Activated CD4-positive, alpha-beta memory T cell treated with anti-CD3 and anti-CD28 coated beads for 36 hours (primary cell): ENCODE measurements at regions of chr2 and their contacts with region 1.

Region 1: DNA sequence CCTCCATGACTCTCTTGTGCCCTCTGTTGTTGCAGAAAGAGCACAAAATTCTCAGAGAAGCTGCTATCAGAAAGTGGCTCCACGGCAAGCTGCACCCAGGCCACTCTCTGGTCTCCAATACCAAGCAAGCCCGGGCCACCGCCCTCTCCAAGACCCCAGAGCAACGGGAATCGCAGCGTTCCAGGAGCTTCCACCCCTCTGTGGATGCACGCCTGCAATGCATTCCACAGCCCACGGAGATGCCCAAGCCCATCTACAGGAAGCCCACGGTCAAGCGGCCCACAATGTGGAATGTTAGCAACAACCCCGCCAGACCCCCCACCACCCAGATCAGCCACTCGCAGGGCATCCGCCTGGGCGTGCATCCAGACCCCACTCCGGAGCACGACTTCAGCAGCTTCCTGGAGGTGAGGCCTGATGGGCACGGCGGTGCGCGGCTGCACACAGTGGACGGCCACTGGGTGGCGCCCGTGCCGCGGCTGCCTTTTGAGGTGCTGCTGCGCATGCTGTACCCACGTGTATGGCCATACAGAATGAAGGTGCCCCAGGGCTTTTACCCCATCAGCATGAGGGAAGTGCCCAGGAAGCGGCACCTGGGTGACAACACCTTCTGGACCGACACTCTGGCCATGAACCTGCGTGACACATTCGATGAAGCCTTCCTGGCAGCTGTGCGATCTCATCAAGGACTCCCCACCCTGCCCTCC is 6.3 kb downstream of the ANKRD53 start:
- DNase-seq: peak; percentile 87
- H3K4me3 Mint-ChIP-seq: no peak overlapping the region
- H3K27ac Mint-ChIP-seq: no peak overlapping the region
- H3K4me1 Mint-ChIP-seq: peaks cover 12% of the 10 kb centered on the region
- H3K27me3 Mint-ChIP-seq: no peaks in the 10 kb centered on the region

Region 2: GRCh38 chr2:70994756-70995729 is 10.3 kb after region 1 on chr2 and contains the start of gene TEX261:
- CTCF ChIA-PET with region 1: interaction called, 53 read pairs
- POLR2A ChIA-PET with region 1: no interaction called
- intact Hi-C with region 1: loop called (anchors 1 kb)
- DNase-seq: peak; percentile 94
- H3K4me3 Mint-ChIP-seq: peak within 1 kb of the TSS; percentile 93
- H3K27ac Mint-ChIP-seq: peak within 1 kb of the TSS; percentile 91
- H3K4me1 Mint-ChIP-seq: peaks cover 31% of the 10 kb centered on the region
- H3K27me3 Mint-ChIP-seq: no peaks in the 10 kb centered on the region
- total RNA-seq, gene TEX261: 29.0 to 29.9 TPM

Region 3: GRCh38 chr2:71000780-71001591 is 16.3 kb after region 1 on chr2:
- CTCF ChIA-PET with region 1: interaction called, 53 read pairs
- POLR2A ChIA-PET with region 1: no interaction called
- intact Hi-C with region 1: loop called (anchors 1 kb)
- DNase-seq: peak; percentile 89
- H3K4me3 Mint-ChIP-seq: peak overlapping the region; percentile 72
- H3K27ac Mint-ChIP-seq: peak overlapping the region; percentile 74
- H3K4me1 Mint-ChIP-seq: peaks cover 7% of the 10 kb centered on the region
- H3K27me3 Mint-ChIP-seq: peaks cover 2% of the 10 kb centered on the region

Region 4: DNA sequence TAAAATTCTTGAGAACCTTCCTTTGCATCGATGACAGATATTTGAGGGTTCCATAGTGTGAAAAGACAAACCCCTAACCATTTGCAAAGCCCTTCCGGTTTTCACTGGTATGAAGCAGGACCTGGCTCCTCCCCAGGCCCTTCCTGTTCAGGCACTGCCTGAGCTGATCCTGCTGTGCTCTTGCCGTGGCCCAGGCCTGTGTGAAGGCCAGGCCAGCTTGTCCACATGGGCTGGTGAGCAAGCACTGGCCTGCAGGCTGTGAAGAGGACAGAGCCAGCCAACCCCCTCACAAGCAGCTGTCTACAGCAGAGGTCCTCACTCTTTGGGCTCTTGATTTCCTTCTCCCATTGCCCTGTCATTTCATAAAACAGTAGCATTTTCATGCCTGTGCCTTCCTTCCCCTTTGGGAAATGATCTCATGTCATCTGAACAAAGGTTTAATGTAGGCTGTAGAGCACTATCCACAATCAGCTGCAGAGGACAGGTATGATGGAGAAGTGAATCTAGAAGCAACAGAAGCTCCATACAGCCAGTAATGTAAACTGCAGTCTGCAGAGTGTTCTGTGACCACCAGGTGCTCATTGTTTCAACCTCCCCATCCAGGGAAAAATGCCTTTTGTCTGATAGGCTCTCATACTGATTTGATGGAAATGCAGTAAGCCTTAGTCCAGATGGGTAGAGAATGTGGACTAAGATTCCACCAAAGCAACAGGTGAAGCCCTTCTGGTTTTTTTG is 165.5 kb after region 1 on chr2:
- CTCF ChIA-PET with region 1: no interaction called
- POLR2A ChIA-PET with region 1: no interaction called
- intact Hi-C with region 1: no loop called
- DNase-seq: no peak
- H3K4me3 Mint-ChIP-seq: no peak overlapping the region
- H3K27ac Mint-ChIP-seq: no peak overlapping the region
- H3K4me1 Mint-ChIP-seq: no peaks in the 10 kb centered on the region
- H3K27me3 Mint-ChIP-seq: no peaks in the 10 kb centered on the region